Heart left ventricle (tissue), 16 donors: ENCODE measurements at regions of chr10 and their contacts with region 1.

Region 1: GRCh38 chr10:48289501-48290238 is 15.2 kb upstream of the FRMPD2 start:
- DNase-seq: peak; percentile 32 to 71 (median 49)
- ATAC-seq: peak; percentile 48 to 79 (median 66)
- H3K4me3 ChIP-seq: no peak overlapping the region
- H3K27ac ChIP-seq: no peak overlapping the region
- H3K4me1 ChIP-seq: peaks cover 0 to 15% (median 3%) of the 10 kb centered on the region in 12 donors
- H3K27me3 ChIP-seq: no peaks in the 10 kb centered on the region
- CTCF ChIP-seq: peak; percentile 72 to 87 (median 81)
- POLR2A ChIP-seq: no peak

Region 2: GRCh38 chr10:48215488-48216204 is 74.0 kb before region 1 on chr10:
- intact Hi-C with region 1: loop called in 5 of 10 experiments (anchors 2 to 5 kb)
- DNase-seq: peak in 1 of 5 donors; percentile 20
- ATAC-seq: peak in 2 of 4 donors; percentile 36 to 64
- H3K4me3 ChIP-seq: no peak overlapping the region
- H3K27ac ChIP-seq: no peak overlapping the region
- H3K4me1 ChIP-seq: no peaks in the 10 kb centered on the region
- H3K27me3 ChIP-seq: peaks cover 0 to 13% (median 0%) of the 10 kb centered on the region in 9 donors
- CTCF ChIP-seq: peak; percentile 34 to 62 (median 55)
- POLR2A ChIP-seq: no peak

Region 3: GRCh38 chr10:48353246-48353645 is 63.6 kb after region 1 on chr10:
- intact Hi-C with region 1: no loop called
- DNase-seq: no peak
- ATAC-seq: peak in 3 of 4 donors; percentile 51 to 72 (median 63)
- H3K4me3 ChIP-seq: no peak overlapping the region
- H3K27ac ChIP-seq: no peak overlapping the region
- H3K4me1 ChIP-seq: peaks cover 0 to 22% (median 0%) of the 10 kb centered on the region in 12 donors
- H3K27me3 ChIP-seq: no peaks in the 10 kb centered on the region
- CTCF ChIP-seq: no peak
- POLR2A ChIP-seq: no peak

Region 4: GRCh38 chr10:48496831-48497779 is 207.4 kb after region 1 on chr10:
- intact Hi-C with region 1: no loop called
- DNase-seq: peak in 3 of 5 donors; percentile 32 to 62 (median 49)
- ATAC-seq: peak in 3 of 4 donors; percentile 70 to 87 (median 73)
- H3K4me3 ChIP-seq: no peak overlapping the region
- H3K27ac ChIP-seq: peak overlapping the region in 2 of 12 donors; percentile 5 to 27
- H3K4me1 ChIP-seq: peaks cover 0 to 22% (median 2%) of the 10 kb centered on the region in 12 donors
- H3K27me3 ChIP-seq: no peaks in the 10 kb centered on the region
- CTCF ChIP-seq: no peak
- POLR2A ChIP-seq: no peak